Ascending aorta (tissue), 2 donors: ENCODE measurements at regions of chr6 and their contacts with region 1.

Region 1: DNA sequence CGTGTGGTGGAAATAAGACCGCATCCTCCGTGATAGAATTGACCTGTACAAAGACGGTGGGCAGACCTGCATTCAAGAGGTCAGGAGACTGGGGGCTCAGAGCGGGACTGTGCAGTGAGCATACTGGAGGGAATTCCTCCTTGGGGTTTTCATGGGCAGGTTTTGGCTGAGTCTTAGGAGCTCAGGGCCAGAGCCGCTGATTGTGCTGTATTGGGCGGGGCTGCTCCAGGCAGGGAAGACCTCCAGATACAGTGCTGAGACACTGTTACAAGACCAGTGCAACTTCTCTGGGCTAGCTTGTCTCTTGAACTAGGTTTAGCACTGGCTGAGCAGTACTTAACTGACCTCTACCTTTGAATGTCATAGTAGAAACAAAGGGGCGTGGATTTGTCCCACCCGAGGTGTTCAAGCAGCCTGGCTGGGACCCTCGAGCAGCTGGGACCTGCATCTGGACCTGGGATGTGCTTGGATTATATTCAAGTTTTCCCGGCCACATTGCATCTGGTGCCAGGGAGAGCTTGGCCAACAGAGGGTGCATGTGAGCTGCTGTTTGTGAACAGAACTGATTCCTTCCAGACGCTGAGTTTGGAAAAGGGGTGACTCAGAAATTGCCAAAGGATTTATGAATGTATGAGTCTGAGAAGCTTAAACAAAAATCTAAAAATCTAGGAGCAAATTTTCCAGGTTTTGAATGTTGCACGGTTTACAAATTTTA is 33.4 kb upstream of the SLC22A1 start:
- DNase-seq: peak in 1 of 2 donors; percentile 89
- H3K4me3 ChIP-seq: no peak overlapping the region
- H3K27ac ChIP-seq: peak overlapping the region in 1 of 2 donors; percentile 68
- H3K4me1 ChIP-seq: peaks cover 4 to 5% of the 10 kb centered on the region in 2 donors
- H3K27me3 ChIP-seq: no peaks in the 10 kb centered on the region
- CTCF ChIP-seq: peak; percentile 75 to 82 (median 82)

Region 2: DNA sequence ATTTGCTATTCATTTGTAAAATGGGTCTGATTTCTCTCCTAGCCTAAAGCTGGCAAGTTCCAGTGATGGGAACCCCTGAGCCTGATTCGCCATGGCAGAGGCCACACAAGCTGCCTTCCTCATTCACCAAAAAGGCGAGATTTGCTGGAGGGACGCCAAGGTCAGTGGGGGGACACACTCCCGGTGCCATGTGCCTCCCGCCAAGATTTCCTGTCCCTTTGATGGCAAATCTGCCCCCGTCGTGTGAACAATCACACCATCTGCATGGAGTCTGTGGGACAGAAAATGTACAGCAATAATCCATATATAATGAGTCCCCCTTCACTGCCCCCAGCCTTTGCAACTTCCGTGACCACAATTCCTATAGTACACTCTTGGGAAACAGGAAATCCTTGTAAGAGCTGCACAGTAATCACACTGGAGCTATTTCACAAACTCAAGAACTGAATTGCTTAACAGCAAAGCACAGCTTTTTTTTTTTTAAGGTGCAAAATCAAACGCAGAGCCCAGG is 135.1 kb before region 1 on chr6:
- intact Hi-C with region 1: no loop called
- DNase-seq: no peak
- H3K4me3 ChIP-seq: no peak overlapping the region
- H3K27ac ChIP-seq: no peak overlapping the region
- H3K4me1 ChIP-seq: no peaks in the 10 kb centered on the region
- H3K27me3 ChIP-seq: no peaks in the 10 kb centered on the region
- CTCF ChIP-seq: no peak

Region 3: GRCh38 chr6:160132776-160133338 is 44.6 kb after region 1 on chr6:
- intact Hi-C with region 1: loop called (anchors 5 kb)
- DNase-seq: peak in 1 of 2 donors; percentile 52
- H3K4me3 ChIP-seq: no peak overlapping the region
- H3K27ac ChIP-seq: peak overlapping the region; percentile 57 to 66
- H3K4me1 ChIP-seq: peaks cover 2 to 7% of the 10 kb centered on the region in 2 donors
- H3K27me3 ChIP-seq: no peaks in the 10 kb centered on the region
- CTCF ChIP-seq: no peak

Region 4: DNA sequence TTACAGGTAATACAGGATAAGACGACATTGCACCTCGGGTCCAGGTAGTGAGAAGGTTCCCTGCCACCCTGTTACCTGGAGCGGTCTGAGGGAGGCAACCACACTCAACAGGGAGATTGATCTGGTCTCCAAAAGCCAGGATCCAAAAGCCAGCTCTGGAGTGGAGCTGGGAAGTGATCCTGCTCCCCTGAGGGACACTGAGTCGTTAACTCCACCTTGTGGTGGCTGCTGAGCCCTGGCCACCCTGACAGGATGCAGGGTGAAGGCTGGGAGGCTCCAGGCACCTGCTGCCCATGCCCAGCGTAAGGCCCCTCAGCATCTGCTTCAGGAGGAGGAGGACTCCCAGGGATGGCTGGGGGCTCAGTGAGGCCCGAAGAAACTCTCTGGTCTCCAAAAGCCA is 209.1 kb after region 1 on chr6:
- intact Hi-C with region 1: loop called (anchors 5 kb)
- DNase-seq: no peak
- H3K4me3 ChIP-seq: no peak overlapping the region
- H3K27ac ChIP-seq: no peak overlapping the region
- H3K4me1 ChIP-seq: peaks cover 7 to 36% of the 10 kb centered on the region in 2 donors
- H3K27me3 ChIP-seq: no peaks in the 10 kb centered on the region
- CTCF ChIP-seq: no peak

Region 5: GRCh38 chr6:160520043-160520904 is 432.0 kb after region 1 on chr6:
- intact Hi-C with region 1: loop called (anchors 5 kb)
- DNase-seq: peak in 1 of 2 donors; percentile 89
- H3K4me3 ChIP-seq: peak overlapping the region; percentile 63 to 93
- H3K27ac ChIP-seq: peak overlapping the region; percentile 73 to 85
- H3K4me1 ChIP-seq: no peaks in the 10 kb centered on the region
- H3K27me3 ChIP-seq: no peaks in the 10 kb centered on the region
- CTCF ChIP-seq: no peak